Right cardiac atrium (tissue), 5 donors: ENCODE measurements at regions of chr5 and their contacts with region 1.

Region 1: DNA sequence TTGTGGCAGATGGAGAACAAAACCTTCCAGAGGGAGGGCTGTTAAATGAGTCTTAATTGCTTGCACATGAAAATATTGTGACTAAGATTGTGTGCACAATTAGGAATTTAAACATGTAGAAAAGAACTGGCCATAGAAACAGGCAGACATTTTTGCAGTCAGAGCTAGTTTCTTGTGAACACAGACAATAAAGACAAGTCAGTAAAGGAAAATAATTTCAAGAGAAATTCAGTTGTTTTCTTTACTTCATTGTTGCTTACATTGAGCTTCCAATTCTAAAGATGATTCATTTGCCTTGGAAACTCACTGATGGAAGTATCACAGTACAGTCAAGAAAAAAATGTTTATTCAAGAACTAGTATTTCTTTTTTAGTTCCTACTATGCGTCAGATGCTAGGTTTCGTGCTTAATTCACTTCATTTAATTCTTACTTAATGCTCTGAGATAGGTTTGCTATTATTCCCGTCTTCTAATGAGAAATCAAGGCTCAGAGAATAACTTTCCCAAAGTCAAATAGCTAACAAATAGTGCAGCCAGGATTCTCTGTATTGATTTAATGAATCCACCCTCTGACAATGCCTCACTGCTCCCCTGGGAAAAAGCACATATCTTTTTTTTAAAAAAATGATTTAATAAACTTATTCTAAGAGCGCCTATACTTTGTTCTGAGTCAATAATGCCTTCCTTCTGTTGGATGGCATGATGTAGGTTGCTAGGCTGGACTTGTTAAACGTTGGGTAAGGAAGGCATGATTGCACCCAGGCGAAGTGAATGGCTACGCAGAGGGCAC is 581.4 kb downstream of the RAB3C start:
- DNase-seq: no peak
- ATAC-seq: no peak
- H3K4me3 ChIP-seq: no peak overlapping the region
- H3K27ac ChIP-seq: no peak overlapping the region
- H3K4me1 ChIP-seq: peaks cover 3% of the 10 kb centered on the region
- H3K27me3 ChIP-seq: no peaks in the 10 kb centered on the region

Region 2: GRCh38 chr5:59126708-59127573 is 37.3 kb before region 1 on chr5:
- intact Hi-C with region 1: loop called in 1 of 4 experiments (anchors 5 kb)
- DNase-seq: no peak
- ATAC-seq: no peak
- H3K4me3 ChIP-seq: peak overlapping the region; percentile 33
- H3K27ac ChIP-seq: peak overlapping the region; percentile 97
- H3K4me1 ChIP-seq: peaks cover 8% of the 10 kb centered on the region
- H3K27me3 ChIP-seq: no peaks in the 10 kb centered on the region

Region 3: GRCh38 chr5:59209758-59210359 is 45.6 kb after region 1 on chr5:
- intact Hi-C with region 1: no loop called
- DNase-seq: no peak
- ATAC-seq: no peak
- H3K4me3 ChIP-seq: no peak overlapping the region
- H3K27ac ChIP-seq: no peak overlapping the region
- H3K4me1 ChIP-seq: peaks cover 9% of the 10 kb centered on the region
- H3K27me3 ChIP-seq: no peaks in the 10 kb centered on the region

Region 4: GRCh38 chr5:59231221-59231931 is 67.1 kb after region 1 on chr5:
- intact Hi-C with region 1: no loop called
- DNase-seq: no peak
- ATAC-seq: no peak
- H3K4me3 ChIP-seq: no peak overlapping the region
- H3K27ac ChIP-seq: no peak overlapping the region
- H3K4me1 ChIP-seq: peaks cover under 1% of the 10 kb centered on the region
- H3K27me3 ChIP-seq: no peaks in the 10 kb centered on the region